Right ventricle myocardium superior (tissue), 1 donor: ENCODE measurements at regions of chr6 and their contacts with region 1.

Region 1: DNA sequence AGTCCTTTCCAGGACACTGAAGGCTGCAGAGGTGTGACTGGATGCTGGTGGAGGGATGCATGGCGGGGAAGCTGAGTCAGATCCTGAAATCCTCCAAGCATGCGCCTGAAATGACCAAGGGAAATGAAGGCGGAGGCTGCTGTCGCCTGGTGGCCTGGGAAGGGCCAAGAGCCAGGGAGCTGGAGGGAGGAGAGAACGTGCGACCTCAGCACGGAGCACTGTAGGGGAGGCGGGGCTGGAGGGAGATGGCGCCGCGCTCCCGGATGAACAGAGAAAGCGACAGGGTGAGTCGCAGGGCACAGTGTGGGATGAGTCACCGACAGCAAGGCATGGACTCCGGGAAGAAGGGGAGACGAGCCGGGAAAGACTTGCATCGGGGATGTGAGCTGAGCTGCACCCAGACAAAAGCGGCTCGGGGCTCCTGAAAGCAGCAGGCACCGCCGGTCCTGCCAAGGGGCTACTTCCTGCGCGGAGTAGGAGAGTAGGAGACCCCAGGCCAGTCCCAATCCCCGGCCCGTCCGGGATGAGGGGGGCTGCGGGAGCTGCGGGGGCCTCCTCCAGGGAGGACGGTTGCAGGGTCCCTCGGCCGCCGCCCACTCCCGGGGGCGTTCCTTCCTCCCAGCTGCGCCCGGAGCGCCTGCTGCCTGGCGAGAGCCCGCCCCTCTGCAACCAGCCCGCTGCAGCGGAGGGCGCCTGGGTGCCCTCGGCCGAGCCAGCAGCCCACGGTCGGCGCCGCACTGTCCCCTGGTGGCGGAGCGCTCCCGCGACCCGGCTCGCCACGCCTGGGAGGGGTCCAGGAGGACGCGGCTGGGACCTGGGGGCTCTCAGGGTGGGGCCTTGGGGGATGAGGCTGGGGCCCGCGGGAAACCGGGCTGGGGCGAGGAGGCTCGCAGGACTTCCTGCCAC is 11.0 kb upstream of the NQO2 start:
- DNase-seq: peak; percentile 94
- ATAC-seq: peak; percentile 88

Region 2: GRCh38 chr6:2841264-2842138 is 147.2 kb before region 1 on chr6 and contains the start of gene SERPINB1:
- intact Hi-C with region 1: loop called (anchors 2 kb)
- DNase-seq: peak; percentile 96
- ATAC-seq: peak; percentile 93
- total RNA-seq, gene SERPINB1: 25.3 TPM

Region 3: DNA sequence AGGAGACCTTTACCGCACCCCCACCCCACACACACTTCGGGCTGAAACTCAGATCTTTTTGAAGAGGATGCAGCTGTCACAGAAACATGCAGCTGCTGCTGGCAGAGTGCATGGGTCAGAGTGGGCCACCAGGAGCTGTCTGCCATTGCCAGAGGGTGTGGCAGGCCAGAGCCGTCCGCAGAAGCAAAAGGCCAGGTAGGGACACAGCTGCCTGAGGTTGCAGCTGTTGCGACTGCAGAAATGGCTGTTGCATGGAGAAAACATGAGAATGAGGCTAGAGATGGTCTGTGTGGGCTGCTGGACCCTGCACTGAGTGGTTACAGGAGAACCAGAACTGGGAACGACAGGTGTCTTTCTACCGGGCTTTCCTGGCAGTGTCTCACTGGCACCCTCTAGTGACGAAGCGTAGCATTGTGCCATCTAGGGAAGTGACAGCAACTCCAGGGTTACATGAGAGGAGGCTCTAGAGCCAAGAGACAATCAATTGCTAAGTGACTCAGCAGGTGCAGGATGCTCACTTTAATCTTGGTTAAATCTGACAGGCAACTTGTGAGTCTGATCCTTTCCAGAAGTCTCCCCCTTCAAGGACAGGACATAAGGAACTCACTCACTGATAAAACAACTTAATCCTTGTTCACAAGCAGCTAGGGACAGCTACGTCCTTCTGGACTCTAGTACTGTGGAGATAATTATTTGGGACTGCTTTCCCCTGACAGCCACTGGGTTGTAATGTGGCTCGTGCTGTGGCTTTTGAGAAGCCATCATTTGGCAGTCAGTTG is 56.5 kb before region 1 on chr6:
- intact Hi-C with region 1: loop called (anchors 10 kb)
- DNase-seq: peak; percentile 82
- ATAC-seq: peak; percentile 96

Region 4: GRCh38 chr6:2952557-2953095 is 36.1 kb before region 1 on chr6:
- intact Hi-C with region 1: loop called (anchors 5 kb)
- DNase-seq: peak; percentile 84
- ATAC-seq: peak; percentile 64